ENCODE measurements at regions of chr18 and their contacts with region 1.

Region 1: DNA sequence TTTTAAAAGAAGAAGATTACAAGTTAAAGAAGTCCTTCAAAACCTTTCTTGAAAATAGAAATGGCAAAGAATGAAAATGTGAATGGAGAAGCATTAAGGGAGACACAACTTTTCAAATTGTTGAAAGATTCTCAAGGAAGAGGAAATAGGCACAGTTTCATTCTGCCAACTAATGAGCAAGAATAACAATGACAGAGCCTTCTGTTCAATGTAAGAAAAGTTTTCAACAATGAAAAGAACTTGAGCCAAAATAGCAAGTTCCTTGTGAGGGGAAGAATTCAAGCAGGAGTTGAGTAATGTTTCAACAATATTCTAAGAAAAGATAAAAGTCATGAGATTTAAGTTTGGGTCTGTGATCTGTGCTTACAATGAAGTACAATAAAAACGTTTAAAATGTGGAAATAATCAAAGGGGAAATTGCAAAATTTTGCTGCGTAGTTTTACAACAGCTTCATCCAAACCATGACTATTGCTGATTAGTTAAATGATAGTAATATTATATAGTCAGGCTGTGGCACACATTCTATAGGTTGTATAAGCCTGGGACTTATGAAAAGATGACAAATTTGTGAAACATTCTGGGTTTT is 122.6 kb downstream of the METTL4 start:
- DNase-seq: peak; percentile 32
- H3K4me3 ChIP-seq: no peak overlapping the region
- H3K27me3 ChIP-seq: no peaks in the 10 kb centered on the region
- CTCF ChIP-seq: no peak

Region 2: DNA sequence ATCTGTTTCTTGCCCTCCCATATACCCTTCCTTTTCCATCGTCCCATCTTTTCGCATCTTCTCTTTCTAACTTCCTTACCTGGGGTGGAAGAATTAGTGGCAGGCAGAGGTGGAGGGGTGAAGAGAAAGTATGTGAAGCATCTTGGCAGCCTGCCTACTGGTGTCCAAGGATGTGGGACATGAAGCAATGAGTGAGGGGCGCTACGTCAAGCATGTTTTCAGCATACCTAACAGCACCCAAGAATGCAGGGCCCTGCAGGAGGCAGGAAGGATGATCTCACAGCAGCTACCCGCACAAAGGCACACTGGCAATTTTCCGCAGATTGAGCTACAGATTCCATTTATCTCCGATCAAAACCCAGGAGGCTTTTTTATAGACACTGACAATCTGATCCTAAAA is 80.5 kb after region 1 on chr18:
- CTCF ChIA-PET with region 1: interaction called, 3 read pairs
- POLR2A ChIA-PET with region 1: interaction called, 21 read pairs
- DNase-seq: no peak
- H3K4me3 ChIP-seq: no peak overlapping the region
- H3K27me3 ChIP-seq: no peaks in the 10 kb centered on the region
- CTCF ChIP-seq: no peak

Measured in BJ (cell line).